Activated T-helper 2 cell treated with anti-CD3 and anti-CD28 coated beads, Interferon-gamma antibody, Interleukin-2, Interleukin-4, amounts not matched to agents 10 μg/mL and 5 μg/mL and 100 μg/mL, durations not matched to agents 14 hours and 24 hours and 36 hours (primary cell): ENCODE measurements at regions of chr3 and their contacts with region 1.

Region 1: DNA sequence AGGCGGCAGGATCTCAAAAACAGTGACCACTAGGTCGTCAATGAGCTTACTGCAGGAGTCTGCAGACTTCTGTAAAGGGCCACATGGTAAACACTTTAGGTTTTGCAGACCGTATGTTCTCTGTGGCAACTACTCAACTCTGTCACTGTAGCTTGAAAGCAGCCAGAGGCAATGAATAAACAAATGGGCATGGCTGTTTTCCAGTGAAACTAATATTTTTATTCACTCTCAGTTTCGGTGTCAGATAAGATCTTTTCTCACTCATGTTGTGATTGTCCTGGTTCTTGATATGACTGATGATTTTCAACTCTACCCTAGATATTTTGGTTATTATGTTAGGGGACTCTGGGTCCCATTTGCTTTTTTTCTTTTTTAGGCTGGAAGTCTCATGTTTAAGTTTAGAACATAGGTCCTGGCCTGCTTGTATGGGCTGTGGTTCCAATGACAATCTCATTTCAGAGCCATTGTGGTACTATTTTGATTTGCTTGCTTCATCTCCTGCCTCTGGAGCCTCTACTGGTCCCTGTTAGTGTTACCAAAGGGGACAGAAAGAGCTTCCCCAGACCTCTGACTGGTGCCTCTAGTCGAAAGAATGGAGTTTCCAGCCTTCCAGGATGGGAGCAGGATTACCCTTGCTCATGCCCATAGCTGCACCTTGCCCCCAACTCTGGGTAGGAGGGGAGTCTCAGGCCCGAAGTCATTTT is 222.0 kb downstream of the STT3B start:
- DNase-seq: peak; percentile 16
- H3K4me3 Mint-ChIP-seq: no peak overlapping the region
- H3K27ac Mint-ChIP-seq: peak overlapping the region; percentile 98
- H3K4me1 Mint-ChIP-seq: peaks cover 54% of the 10 kb centered on the region
- H3K27me3 Mint-ChIP-seq: no peaks in the 10 kb centered on the region

Region 2: GRCh38 chr3:31077021-31077601 is 677.6 kb before region 1 on chr3:
- intact Hi-C with region 1: loop called (anchors 10 kb)
- DNase-seq: peak; percentile 18
- H3K4me3 Mint-ChIP-seq: no peak overlapping the region
- H3K27ac Mint-ChIP-seq: peak overlapping the region; percentile 52
- H3K4me1 Mint-ChIP-seq: peaks cover 34% of the 10 kb centered on the region
- H3K27me3 Mint-ChIP-seq: peaks cover 7% of the 10 kb centered on the region

Region 3: DNA sequence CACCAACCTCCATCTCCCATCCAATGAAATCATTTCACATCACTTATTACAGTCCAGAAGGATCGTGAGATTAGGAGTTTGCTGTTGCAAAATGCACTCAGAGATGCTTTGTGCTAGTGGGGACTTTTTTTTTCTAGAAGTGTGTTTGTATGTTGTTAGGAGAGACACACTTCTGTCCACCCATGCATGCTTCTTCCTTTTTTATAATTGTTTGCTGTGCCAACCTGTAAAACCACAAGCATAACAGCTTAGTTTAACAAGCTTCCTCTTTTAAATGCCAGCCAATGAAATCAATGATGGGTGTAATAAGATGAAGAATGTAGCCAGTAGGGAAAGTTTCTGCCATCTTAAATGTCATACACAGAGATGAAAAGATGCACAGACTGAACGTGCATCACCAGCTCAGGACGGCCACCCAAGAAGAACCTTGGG is 527.6 kb before region 1 on chr3:
- intact Hi-C with region 1: loop called (anchors 5 kb)
- DNase-seq: no peak
- H3K4me3 Mint-ChIP-seq: no peak overlapping the region
- H3K27ac Mint-ChIP-seq: no peak overlapping the region
- H3K4me1 Mint-ChIP-seq: peaks cover 74% of the 10 kb centered on the region
- H3K27me3 Mint-ChIP-seq: no peaks in the 10 kb centered on the region

Region 4: GRCh38 chr3:31275038-31275562 is 479.6 kb before region 1 on chr3:
- intact Hi-C with region 1: no loop called
- DNase-seq: no peak
- H3K4me3 Mint-ChIP-seq: no peak overlapping the region
- H3K27ac Mint-ChIP-seq: no peak overlapping the region
- H3K4me1 Mint-ChIP-seq: peaks cover 4% of the 10 kb centered on the region
- H3K27me3 Mint-ChIP-seq: peaks cover 16% of the 10 kb centered on the region

Region 5: DNA sequence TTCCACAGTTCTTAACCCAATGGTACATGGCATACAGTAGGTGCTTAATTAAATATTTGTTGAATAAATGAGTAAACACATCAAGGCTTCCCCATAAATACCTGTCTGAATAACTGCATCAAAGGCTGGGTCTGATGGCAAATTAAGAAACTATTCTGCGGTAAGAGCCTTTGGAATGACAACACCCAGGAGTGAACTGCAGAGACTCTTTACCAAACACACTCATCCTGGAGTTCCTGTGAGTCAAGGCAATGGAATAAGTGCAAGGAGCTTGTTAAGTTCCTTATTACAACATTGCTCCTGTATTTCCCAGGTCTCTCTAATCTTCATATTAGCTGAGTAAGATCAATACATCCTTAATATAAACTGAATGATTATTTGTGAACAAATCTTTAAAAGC is 341.9 kb before region 1 on chr3:
- intact Hi-C with region 1: no loop called
- DNase-seq: no peak
- H3K4me3 Mint-ChIP-seq: no peak overlapping the region
- H3K27ac Mint-ChIP-seq: no peak overlapping the region
- H3K4me1 Mint-ChIP-seq: no peaks in the 10 kb centered on the region
- H3K27me3 Mint-ChIP-seq: peaks cover 8% of the 10 kb centered on the region

Region 6: GRCh38 chr3:31515486-31516284 is 239.0 kb before region 1 on chr3:
- intact Hi-C with region 1: no loop called
- DNase-seq: no peak
- H3K4me3 Mint-ChIP-seq: no peak overlapping the region
- H3K27ac Mint-ChIP-seq: no peak overlapping the region
- H3K4me1 Mint-ChIP-seq: no peaks in the 10 kb centered on the region
- H3K27me3 Mint-ChIP-seq: peaks cover 9% of the 10 kb centered on the region

Region 7: GRCh38 chr3:31610700-31611275 is 143.9 kb before region 1 on chr3:
- intact Hi-C with region 1: loop called (anchors 5 kb)
- DNase-seq: no peak
- H3K4me3 Mint-ChIP-seq: no peak overlapping the region
- H3K27ac Mint-ChIP-seq: no peak overlapping the region
- H3K4me1 Mint-ChIP-seq: peaks cover 33% of the 10 kb centered on the region
- H3K27me3 Mint-ChIP-seq: no peaks in the 10 kb centered on the region

Region 8: DNA sequence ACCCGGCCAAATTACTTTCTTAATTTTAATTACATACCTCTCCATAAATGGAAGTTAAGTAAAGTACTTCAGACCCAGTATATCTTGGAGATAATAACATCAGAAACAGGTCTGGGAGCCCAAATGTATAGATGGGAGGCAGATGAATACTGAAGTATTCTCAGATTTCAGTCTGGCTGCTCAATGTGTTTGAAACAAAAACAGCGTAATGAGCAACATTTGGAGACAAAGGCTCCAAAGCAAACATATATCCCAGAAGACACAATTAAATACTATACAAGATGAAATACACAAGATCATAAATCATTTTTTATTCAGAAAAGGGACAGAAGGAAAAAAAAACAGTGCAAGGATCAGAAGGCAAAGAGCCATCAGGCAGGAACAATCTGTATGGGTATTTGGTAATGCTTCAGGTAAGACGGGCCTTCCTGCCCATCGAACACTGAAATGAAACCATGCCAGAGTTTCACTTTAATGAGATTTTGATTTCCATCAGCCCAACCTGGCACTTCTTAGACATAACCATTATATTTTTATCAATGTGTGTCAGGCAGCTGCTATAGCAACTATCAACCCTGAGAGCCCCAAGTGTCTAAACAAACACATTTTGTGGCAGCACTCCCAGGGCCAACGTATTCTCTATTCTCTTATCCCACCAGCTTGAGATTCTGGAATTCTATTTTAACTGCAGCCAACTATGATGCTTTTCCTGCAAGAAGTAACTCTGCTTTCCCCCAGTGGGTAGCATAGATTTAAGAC is 11.2 kb before region 1 on chr3:
- intact Hi-C with region 1: no loop called
- DNase-seq: no peak
- H3K4me3 Mint-ChIP-seq: no peak overlapping the region
- H3K27ac Mint-ChIP-seq: no peak overlapping the region
- H3K4me1 Mint-ChIP-seq: no peaks in the 10 kb centered on the region
- H3K27me3 Mint-ChIP-seq: no peaks in the 10 kb centered on the region

Region 9: DNA sequence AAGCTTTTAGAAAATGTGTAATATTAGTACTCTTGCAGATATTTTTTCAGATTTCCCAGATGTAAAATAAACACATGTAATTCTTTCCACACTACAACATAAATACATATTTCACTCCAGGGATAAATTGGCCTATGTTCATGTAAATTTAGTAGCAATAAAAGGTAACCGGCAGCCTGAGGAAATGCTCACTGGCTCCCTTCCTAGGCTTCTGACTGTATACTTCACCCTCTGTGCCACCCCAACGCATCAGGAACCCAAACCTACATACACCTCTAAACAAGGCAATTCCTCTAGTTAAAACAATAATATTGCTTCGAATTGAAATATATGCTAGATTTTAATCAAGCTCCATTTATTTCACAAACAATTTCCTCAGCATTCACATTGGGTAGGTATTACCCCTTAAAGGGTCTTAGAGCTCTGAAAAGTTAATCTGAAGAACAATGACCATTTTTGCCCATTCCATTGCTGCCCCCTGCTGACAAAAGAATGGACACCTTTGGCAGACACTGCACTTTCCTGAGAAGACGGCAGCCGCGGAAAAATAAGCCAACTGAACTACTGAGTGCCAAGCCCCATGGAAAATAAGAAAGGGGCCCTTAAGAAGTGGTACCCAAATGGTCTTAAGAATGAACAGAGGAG is 13.9 kb after region 1 on chr3:
- intact Hi-C with region 1: loop called (anchors 1 kb)
- DNase-seq: peak; percentile 36
- H3K4me3 Mint-ChIP-seq: no peak overlapping the region
- H3K27ac Mint-ChIP-seq: peak overlapping the region; percentile 33
- H3K4me1 Mint-ChIP-seq: peaks cover 57% of the 10 kb centered on the region
- H3K27me3 Mint-ChIP-seq: no peaks in the 10 kb centered on the region

Region 10: DNA sequence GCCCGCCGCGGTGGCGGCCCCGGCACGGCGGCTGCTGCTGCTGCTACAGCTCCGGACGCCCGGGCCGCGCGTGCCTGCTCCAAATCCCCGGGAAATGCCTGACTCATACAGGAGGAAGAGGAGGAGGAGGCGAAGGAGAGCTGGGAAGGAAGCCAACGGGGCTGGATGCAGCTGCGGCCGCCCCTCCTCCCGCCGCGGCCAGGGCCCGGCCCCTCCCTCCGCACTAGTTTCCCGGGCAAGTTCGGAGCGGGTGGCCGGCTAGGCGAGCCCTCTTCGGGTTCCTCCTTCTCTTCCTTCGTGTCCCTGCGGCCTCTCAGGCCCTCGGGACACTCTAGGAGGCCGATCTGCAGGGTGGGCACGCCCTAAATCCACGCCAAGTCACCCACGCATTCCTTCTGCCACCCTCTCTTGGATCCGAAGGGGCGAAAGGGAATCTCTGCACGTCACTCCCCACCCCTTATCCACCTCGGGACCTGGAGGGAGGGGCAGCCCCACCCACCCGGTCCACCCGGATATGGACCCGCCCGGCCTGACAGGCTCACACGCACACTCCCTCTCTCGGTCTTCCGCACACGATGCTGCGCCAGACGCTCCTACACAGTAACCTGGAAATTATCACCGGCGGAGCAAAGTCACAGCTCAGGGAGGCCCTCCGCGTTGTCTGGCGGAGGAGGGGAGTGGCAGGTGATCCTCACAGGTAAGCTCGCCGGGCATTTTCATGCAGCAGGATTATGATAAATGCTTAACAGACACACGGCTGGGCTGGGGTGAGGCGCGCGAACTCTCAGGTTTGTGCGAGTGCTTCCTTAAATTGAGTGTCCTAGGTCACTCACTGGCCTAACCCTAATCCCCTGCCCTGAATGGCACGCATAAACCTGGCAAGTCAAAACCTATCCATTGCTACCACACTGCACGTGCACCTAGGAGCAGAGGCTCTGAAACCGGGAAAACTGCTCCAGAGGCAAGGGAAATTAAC is 226.8 kb after region 1 on chr3 and contains the starts of genes OSBPL10 and ZNF860:
- intact Hi-C with region 1: loop called (anchors 1 kb)
- DNase-seq: no peak
- H3K4me3 Mint-ChIP-seq: peak within 1 kb of the TSS; percentile 86
- H3K27ac Mint-ChIP-seq: peak within 1 kb of the TSS; percentile 65
- H3K4me1 Mint-ChIP-seq: peaks cover 21% of the 10 kb centered on the region
- H3K27me3 Mint-ChIP-seq: peaks cover 36% of the 10 kb centered on the region
- total RNA-seq, gene OSBPL10: 42.5 and 47.6 TPM in 2 replicates
- total RNA-seq, gene ZNF860: 1.8 and 2.0 TPM in 2 replicates